ENCODE measurements at regions of chrX and their contacts with region 1.

Region 1: GRCh38 chrX:15143050-15143824 is 126.6 kb downstream of the ASB9 start:
- DNase-seq: peak; percentile 71
- H3K4me3 ChIP-seq: no peak overlapping the region
- H3K27ac ChIP-seq: no peak overlapping the region
- H3K4me1 ChIP-seq: no peaks in the 10 kb centered on the region
- H3K27me3 ChIP-seq: no peaks in the 10 kb centered on the region
- CTCF ChIP-seq: peak; percentile 46

Region 2: GRCh38 chrX:13506574-13506973 is 1636.7 kb before region 1 on chrX:
- intact Hi-C with region 1: loop called (anchors 10 kb)
- DNase-seq: peak; percentile 39
- H3K4me3 ChIP-seq: no peak overlapping the region
- H3K27ac ChIP-seq: no peak overlapping the region
- H3K4me1 ChIP-seq: no peaks in the 10 kb centered on the region
- H3K27me3 ChIP-seq: peaks cover 6% of the 10 kb centered on the region
- CTCF ChIP-seq: peak; percentile 80

Region 3: DNA sequence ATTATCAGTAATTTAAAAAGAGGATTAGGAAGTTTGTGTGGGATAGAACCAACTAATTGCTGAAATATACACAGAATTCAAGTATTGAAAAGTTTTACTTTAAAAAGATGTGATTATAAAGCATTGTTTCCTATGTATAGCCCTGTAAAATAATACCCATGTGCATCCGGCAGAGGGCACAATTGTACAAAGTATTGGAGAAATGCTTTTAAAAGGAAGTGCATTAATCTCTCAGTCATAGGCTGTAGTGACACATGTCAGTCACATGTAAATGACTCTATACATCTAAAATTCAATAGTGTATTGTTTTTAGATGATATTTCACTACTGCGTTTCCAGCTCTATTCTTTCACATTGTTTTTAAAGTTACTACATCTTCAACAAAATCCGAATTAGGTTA is 1103.9 kb before region 1 on chrX:
- intact Hi-C with region 1: loop called (anchors 5 kb)
- DNase-seq: peak; percentile 69
- H3K4me3 ChIP-seq: no peak overlapping the region
- H3K27ac ChIP-seq: no peak overlapping the region
- H3K4me1 ChIP-seq: no peaks in the 10 kb centered on the region
- H3K27me3 ChIP-seq: no peaks in the 10 kb centered on the region
- CTCF ChIP-seq: peak; percentile 85

Region 4: DNA sequence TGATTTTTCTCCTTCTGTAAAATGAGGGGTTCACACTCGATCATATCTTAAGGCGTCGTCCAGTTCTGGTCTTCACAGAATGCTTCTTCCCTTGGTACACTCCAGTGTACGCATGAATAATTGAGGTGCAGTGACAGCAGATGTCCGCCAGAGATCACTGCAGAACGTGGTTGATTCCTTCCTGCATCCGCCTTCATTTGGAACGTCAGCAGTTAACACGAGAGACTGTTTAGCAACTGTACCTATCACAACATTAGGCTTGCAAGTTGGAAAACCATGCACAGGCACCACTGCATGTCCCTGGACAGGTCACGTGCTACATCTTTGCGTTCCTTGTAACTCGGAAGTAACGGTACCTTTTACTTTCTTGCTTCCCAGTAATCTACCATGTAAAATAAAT is 1047.5 kb before region 1 on chrX:
- intact Hi-C with region 1: loop called (anchors 5 kb)
- DNase-seq: peak; percentile 22
- H3K4me3 ChIP-seq: no peak overlapping the region
- H3K27ac ChIP-seq: no peak overlapping the region
- H3K4me1 ChIP-seq: no peaks in the 10 kb centered on the region
- H3K27me3 ChIP-seq: peaks cover 4% of the 10 kb centered on the region
- CTCF ChIP-seq: peak; percentile 35

Region 5: DNA sequence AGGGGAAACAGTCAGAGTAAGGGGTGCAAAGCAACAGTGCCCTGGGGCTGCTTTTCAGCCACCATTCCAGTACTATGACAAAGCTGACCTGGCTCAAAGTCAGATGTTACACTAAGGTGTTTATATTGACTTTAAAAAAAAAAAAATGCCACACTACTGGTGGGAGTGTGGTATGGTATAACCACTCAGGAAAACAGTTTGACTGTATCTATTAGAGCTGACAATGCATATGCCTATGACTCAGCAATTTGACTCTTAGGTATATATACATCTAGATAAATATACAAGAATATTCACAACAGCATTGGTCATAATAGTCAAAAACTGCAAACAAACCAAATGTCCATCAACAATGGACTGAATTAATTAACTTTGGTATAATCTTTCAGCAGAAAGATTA is 111.6 kb after region 1 on chrX:
- intact Hi-C with region 1: no loop called
- DNase-seq: no peak
- H3K4me3 ChIP-seq: no peak overlapping the region
- H3K27ac ChIP-seq: no peak overlapping the region
- H3K4me1 ChIP-seq: no peaks in the 10 kb centered on the region
- H3K27me3 ChIP-seq: no peaks in the 10 kb centered on the region
- CTCF ChIP-seq: no peak

Measured in colonic mucosa (tissue), 4 donors.